IMR-90 (cell line): ENCODE measurements at regions of chr1 and their contacts with region 1.

Region 1: GRCh38 chr1:10280439-10281350 is 70.3 kb downstream of the KIF1B start:
- DNase-seq: peak; percentile 68
- ATAC-seq: peak; percentile 95
- H3K4me3 ChIP-seq: no peak overlapping the region
- H3K27ac ChIP-seq: peak overlapping the region; percentile 34; the same call in 1 of the 2 replicates
- H3K4me1 ChIP-seq: peaks cover 4% of the 10 kb centered on the region
- H3K27me3 ChIP-seq: no peaks in the 10 kb centered on the region
- CTCF ChIP-seq: no peak
- POLR2A ChIP-seq: no peak
- RAD21 ChIP-seq: no peak

Region 2: DNA sequence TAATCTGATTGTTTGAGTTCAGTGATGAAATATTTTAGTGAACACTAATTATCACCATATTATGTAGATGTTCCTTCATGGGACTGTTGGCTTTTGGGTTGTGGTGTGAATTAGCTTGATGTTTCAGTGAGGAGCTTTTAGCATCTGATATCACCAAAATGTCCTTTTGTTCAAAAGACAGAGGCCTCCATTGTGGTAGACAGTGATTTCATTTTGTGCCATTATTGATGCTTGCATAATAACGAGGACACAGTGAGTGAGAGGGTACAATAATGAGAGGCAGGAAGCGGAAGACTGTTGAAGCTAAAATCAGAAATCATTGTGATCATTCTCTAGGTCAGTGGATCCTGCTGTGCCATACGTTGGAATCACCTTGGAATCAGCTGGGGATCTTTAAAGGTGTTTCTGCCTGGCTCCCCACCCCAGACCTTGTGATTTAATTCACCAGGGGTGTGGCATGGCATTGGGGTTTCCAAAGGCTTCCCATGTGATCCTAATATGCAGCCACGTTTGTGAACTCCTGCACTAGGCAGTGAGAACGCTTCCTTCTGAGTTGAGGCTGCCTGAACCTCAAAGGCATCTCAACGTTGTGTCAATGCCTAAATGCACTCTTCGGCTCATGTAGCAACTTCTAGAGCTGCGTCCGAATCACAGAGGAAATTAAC is 152.5 kb before region 1 on chr1:
- CTCF ChIA-PET with region 1: no interaction called
- POLR2A ChIA-PET with region 1: no interaction called
- dilution Hi-C with region 1: no loop called
- in situ Hi-C with region 1: no loop called
- intact Hi-C with region 1: no loop called
- DNase-seq: no peak
- ATAC-seq: no peak
- H3K4me3 ChIP-seq: no peak overlapping the region
- H3K27ac ChIP-seq: no peak overlapping the region
- H3K4me1 ChIP-seq: no peaks in the 10 kb centered on the region
- H3K27me3 ChIP-seq: no peaks in the 10 kb centered on the region
- CTCF ChIP-seq: no peak
- POLR2A ChIP-seq: no peak
- RAD21 ChIP-seq: no peak

Region 3: GRCh38 chr1:10253755-10254154 is 26.9 kb before region 1 on chr1:
- CTCF ChIA-PET with region 1: interaction called, 4 read pairs
- POLR2A ChIA-PET with region 1: interaction called, 13 read pairs
- dilution Hi-C with region 1: no loop called
- in situ Hi-C with region 1: no loop called
- intact Hi-C with region 1: no loop called
- DNase-seq: peak; percentile 90
- ATAC-seq: peak; percentile 90
- H3K4me3 ChIP-seq: no peak overlapping the region
- H3K27ac ChIP-seq: no peak overlapping the region
- H3K4me1 ChIP-seq: peaks cover 7% of the 10 kb centered on the region; the same call in 1 of the 2 replicates
- H3K27me3 ChIP-seq: no peaks in the 10 kb centered on the region
- CTCF ChIP-seq: no peak
- POLR2A ChIP-seq: no peak
- RAD21 ChIP-seq: no peak